CD8-positive, alpha-beta T cell (primary cell): ENCODE measurements at regions of chr2 and their contacts with region 1.

Region 1: DNA sequence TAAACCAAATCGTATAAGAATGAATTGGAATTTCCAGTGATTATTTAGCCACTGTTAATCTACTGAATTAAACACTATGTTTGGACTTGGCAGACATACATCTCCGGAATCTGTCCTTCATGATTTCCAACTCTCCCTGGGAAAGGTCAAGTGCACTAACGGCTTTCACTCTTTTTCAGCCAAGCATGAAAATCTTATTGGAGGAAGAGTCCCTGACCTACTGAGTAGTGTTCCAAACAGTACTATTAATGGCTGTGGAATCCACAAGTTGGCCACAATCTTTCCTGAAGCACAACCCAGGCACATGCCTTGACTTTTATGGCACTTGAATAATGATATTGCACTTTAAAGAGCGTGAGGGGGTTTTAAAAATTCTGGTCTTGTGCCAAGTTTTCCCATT is 318.9 kb upstream of the RND3 start:
- DNase-seq: no peak
- ATAC-seq: no peak
- H3K4me3 ChIP-seq: no peak overlapping the region
- H3K4me3 Mint-ChIP-seq: no peak overlapping the region
- H3K27ac ChIP-seq: no peak overlapping the region
- H3K27ac Mint-ChIP-seq: no peak overlapping the region
- H3K4me1 ChIP-seq: no peaks in the 10 kb centered on the region
- H3K4me1 Mint-ChIP-seq: no peaks in the 10 kb centered on the region
- H3K27me3 ChIP-seq: peaks cover 0 to 2% of the 10 kb centered on the region in 2 experiments
- H3K27me3 Mint-ChIP-seq: no peaks in the 10 kb centered on the region
- CTCF ChIP-seq: no peak

Region 2: DNA sequence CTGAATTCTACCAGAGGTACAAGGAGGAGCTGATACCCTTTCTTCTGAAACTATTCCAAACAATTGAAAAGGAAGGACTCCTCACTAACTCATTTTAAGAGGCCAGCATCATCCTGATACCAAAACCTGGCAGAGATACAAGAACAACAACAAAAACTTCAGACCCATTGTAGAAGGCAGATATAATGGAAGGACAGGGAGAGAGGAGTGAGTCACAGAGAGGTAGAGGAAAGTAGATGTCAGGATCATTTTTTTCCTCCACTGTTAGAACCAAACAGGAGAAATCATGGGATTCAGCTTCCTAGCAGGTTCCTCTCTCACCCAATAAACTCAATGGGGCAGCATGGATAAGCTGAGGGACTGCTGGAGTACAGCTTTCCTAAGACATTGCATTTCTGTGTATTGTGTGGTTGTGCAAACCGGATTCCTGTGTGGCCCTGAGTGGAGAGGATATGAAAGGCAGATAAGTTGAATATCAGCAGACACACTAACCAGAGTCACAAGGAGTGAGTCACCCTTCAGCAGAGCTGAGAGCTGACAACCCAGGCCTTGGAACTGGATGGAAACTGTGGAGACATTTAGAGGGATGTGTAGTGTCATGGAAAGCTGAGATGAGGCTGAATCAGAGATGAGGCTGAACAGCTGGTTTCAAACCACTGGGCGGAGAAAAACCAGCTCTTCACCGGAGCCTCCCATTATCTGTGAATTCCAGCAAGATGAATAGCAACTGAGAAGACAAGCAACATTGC is 1157.9 kb before region 1 on chr2:
- CTCF ChIA-PET with region 1: no interaction called
- POLR2A ChIA-PET with region 1: no interaction called
- intact Hi-C with region 1: loop called in 1 of 2 experiments (anchors 10 kb)
- DNase-seq: no peak
- ATAC-seq: no peak
- H3K4me3 ChIP-seq: no peak overlapping the region
- H3K4me3 Mint-ChIP-seq: no peak overlapping the region
- H3K27ac ChIP-seq: no peak overlapping the region
- H3K27ac Mint-ChIP-seq: no peak overlapping the region
- H3K4me1 ChIP-seq: no peaks in the 10 kb centered on the region
- H3K4me1 Mint-ChIP-seq: no peaks in the 10 kb centered on the region
- H3K27me3 ChIP-seq: no peaks in the 10 kb centered on the region
- H3K27me3 Mint-ChIP-seq: peaks cover 15% of the 10 kb centered on the region
- CTCF ChIP-seq: no peak

Region 3: GRCh38 chr2:150789376-150789905 is 16.9 kb before region 1 on chr2:
- CTCF ChIA-PET with region 1: no interaction called
- POLR2A ChIA-PET with region 1: no interaction called
- intact Hi-C with region 1: no loop called
- DNase-seq: no peak
- ATAC-seq: no peak
- H3K4me3 ChIP-seq: no peak overlapping the region
- H3K4me3 Mint-ChIP-seq: no peak overlapping the region
- H3K27ac ChIP-seq: no peak overlapping the region
- H3K27ac Mint-ChIP-seq: no peak overlapping the region
- H3K4me1 ChIP-seq: no peaks in the 10 kb centered on the region
- H3K4me1 Mint-ChIP-seq: no peaks in the 10 kb centered on the region
- H3K27me3 ChIP-seq: no peaks in the 10 kb centered on the region
- H3K27me3 Mint-ChIP-seq: no peaks in the 10 kb centered on the region
- CTCF ChIP-seq: no peak